ENCODE measurements at regions of chr11 and their contacts with region 1.

Region 1: GRCh38 chr11:118820412-118821357 is 29.7 kb upstream of the DDX6 start:
- DNase-seq: peak; percentile 92 to 96
- ATAC-seq: peak; percentile 93
- H3K4me3 ChIP-seq: no peak overlapping the region
- H3K27ac ChIP-seq: peak overlapping the region in 1 of 2 donors; percentile 68
- H3K4me1 ChIP-seq: no peaks in the 10 kb centered on the region
- H3K27me3 ChIP-seq: no peaks in the 10 kb centered on the region

Region 2: DNA sequence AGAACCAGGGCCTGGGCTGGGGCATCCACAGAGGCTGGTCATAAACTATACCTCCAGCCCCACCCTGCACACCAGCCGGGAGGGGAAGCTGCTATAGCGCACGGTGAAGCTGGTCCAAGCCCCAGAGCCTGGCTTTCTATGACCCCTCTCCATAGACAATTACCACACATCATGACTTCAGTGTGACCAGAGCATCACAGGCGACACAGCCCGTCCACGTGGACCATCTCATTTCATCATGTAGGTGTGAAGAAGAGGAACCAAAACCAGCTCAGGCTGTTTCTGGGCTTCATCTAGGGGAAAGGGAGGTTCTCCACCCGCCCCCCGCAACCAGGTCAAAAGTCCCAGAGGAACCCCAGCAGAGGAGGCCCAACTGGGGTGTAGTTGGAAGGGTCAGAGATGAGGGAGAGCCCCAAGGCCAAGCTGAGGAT is 66.0 kb after region 1 on chr11:
- intact Hi-C with region 1: loop called in 1 of 2 experiments (anchors 1 kb)
- DNase-seq: peak in 1 of 2 donors; percentile 76
- ATAC-seq: no peak
- H3K4me3 ChIP-seq: no peak overlapping the region
- H3K27ac ChIP-seq: peak overlapping the region; percentile 63 to 92
- H3K4me1 ChIP-seq: peaks cover 2 to 10% of the 10 kb centered on the region in 2 donors
- H3K27me3 ChIP-seq: no peaks in the 10 kb centered on the region

Region 3: DNA sequence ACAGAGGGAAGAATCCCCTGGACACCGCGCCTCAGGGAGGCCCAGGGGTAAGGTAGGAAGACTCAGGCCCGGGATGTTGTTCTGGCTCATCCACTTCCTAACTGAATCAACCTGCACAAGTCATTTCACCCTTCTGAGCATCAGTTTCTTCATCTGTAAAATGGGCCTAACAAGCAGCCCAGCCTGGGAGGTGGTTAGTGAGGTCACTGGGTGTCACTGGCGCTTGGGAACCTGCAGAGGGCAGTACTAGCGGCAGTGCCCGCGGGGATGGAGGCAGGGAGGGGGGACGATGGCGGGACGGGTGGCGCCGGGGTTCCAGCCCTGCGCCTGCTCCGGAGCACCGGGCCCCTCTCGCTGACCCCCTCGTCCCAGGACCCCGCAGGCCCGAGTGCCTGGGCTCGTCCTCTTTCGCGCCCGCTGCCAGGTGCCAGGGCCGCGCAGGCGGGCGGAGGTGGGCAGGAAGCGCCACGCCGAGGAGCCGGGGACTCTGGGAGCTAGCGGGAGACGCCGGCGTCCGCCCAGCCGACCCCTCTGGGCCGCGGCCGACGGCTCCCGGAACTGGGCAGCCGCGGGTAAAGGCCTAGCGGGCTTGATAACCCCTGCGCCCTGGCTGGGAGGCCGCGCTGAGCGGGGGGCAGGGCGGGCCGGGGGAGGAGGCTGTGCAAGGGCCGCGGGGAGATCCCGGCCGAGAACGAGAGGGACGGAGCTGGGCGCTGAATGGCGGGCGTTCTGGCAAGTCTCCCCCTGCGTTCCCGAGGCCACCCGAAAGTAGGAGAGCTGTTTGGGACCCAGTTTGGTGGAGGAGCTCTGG is 348.0 kb after region 1 on chr11 and contains the start of gene NLRX1:
- intact Hi-C with region 1: no loop called
- DNase-seq: peak; percentile 92 to 94
- ATAC-seq: peak; percentile 96
- H3K4me3 ChIP-seq: peak within 1 kb of the TSS; percentile 21 to 57
- H3K27ac ChIP-seq: peak within 1 kb of the TSS; percentile 84 to 89
- H3K4me1 ChIP-seq: no peaks in the 10 kb centered on the region
- H3K27me3 ChIP-seq: no peaks in the 10 kb centered on the region
- total RNA-seq, gene NLRX1: 12.1 to 17.3 TPM

Measured in aorta (tissue), 5 donors.